Right ventricle myocardium superior (tissue), 1 donor: ENCODE measurements at regions of chr1 and their contacts with region 1.

Region 1: GRCh38 chr1:114282751-114283403 is 129.2 kb upstream of the SYT6 start:
- DNase-seq: peak; percentile 93
- ATAC-seq: peak; percentile 99

Region 2: GRCh38 chr1:113978863-113979702 is 303.8 kb before region 1 on chr1 and contains the start of gene OLFML3:
- intact Hi-C with region 1: loop called (anchors 2 kb)
- DNase-seq: peak; percentile 85
- ATAC-seq: peak; percentile 76
- total RNA-seq, gene OLFML3: 10.9 TPM

Region 3: GRCh38 chr1:114234408-114235124 is 48.3 kb before region 1 on chr1:
- intact Hi-C with region 1: no loop called
- DNase-seq: no peak
- ATAC-seq: peak; percentile 14

Region 4: GRCh38 chr1:114510274-114511031 is 227.6 kb after region 1 on chr1:
- intact Hi-C with region 1: no loop called
- DNase-seq: peak; percentile 63
- ATAC-seq: peak; percentile 71